Mammary epithelial cell (primary cell): ENCODE measurements at regions of chr2 and their contacts with region 1.

Region 1: GRCh38 chr2:41764930-41765329 is 282.9 kb upstream of the PKDCC start:
- DNase-seq: no peak
- H3K4me3 ChIP-seq: no peak overlapping the region
- H3K27ac ChIP-seq: no peak overlapping the region
- H3K4me1 ChIP-seq: no peaks in the 10 kb centered on the region
- H3K27me3 ChIP-seq: no peaks in the 10 kb centered on the region
- CTCF ChIP-seq: peak in 1 of 2 donors; percentile 64

Region 2: GRCh38 chr2:41414486-41415230 is 350.3 kb before region 1 on chr2:
- CTCF ChIA-PET with region 1: interaction called, 3 read pairs
- dilution Hi-C with region 1: no loop called
- in situ Hi-C with region 1: loop called (anchors 10 to 25 kb)
- intact Hi-C with region 1: loop called (anchors 1 kb)
- DNase-seq: peak; percentile 40
- H3K4me3 ChIP-seq: no peak overlapping the region
- H3K27ac ChIP-seq: no peak overlapping the region
- H3K4me1 ChIP-seq: no peaks in the 10 kb centered on the region
- H3K27me3 ChIP-seq: no peaks in the 10 kb centered on the region
- CTCF ChIP-seq: peak; percentile 65 to 76

Region 3: GRCh38 chr2:41698678-41699422 is 66.1 kb before region 1 on chr2:
- CTCF ChIA-PET with region 1: no interaction called
- dilution Hi-C with region 1: no loop called
- in situ Hi-C with region 1: no loop called
- intact Hi-C with region 1: loop called (anchors 2 kb)
- DNase-seq: no peak
- H3K4me3 ChIP-seq: no peak overlapping the region
- H3K27ac ChIP-seq: no peak overlapping the region
- H3K4me1 ChIP-seq: no peaks in the 10 kb centered on the region
- H3K27me3 ChIP-seq: no peaks in the 10 kb centered on the region
- CTCF ChIP-seq: peak; percentile 51 to 80

Region 4: GRCh38 chr2:41709702-41710599 is 55.0 kb before region 1 on chr2:
- CTCF ChIA-PET with region 1: no interaction called
- dilution Hi-C with region 1: no loop called
- in situ Hi-C with region 1: no loop called
- intact Hi-C with region 1: loop called (anchors 5 kb)
- DNase-seq: peak; percentile 87
- H3K4me3 ChIP-seq: no peak overlapping the region
- H3K27ac ChIP-seq: peak overlapping the region; percentile 46
- H3K4me1 ChIP-seq: peaks cover 22% of the 10 kb centered on the region
- H3K27me3 ChIP-seq: no peaks in the 10 kb centered on the region
- CTCF ChIP-seq: no peak